ENCODE measurements at regions of chr2 and their contacts with region 1.

Region 1: DNA sequence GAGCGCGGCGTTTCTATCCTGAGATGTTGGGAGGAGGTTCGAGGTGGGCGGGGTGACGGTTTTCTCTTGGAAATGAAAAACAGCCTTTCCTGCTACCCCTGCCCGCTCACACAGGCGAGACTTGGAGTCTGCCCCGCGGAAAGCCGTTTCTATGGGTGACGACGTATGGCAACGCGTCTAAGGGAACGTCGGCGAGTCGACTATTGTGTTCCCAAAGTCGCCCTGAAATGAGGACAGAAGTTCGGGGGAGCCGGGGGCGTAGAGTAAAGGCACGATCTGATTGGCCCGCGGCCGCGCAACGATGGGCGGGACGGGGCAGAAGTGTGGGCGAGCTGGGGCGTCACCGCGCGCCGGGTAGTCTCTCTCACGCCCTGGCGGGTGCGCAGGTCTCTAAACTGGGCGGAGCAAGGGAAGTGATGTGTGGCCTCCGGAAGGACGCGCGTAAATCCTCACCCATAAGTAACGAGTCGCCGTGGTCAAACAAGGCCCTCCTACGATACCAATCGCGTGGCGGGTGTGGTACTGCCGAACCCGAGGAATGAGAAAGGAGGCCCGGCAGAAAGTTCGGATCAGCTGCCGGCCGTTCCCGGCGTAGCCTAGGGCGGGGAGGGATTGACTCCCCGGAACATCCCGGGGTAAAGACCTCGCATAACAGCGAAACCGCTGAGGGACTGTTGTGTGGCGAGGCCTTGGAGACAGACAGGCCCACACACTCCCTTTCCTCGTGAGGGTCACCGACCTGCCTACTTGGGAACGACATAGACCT is 89.6 kb downstream of the FAM161A start:
- DNase-seq: peak; percentile 99
- H3K4me3 ChIP-seq: peak overlapping the region; percentile 64 to 69 (median 68)
- H3K27ac ChIP-seq: peak overlapping the region; percentile 95 to 97 (median 96)
- H3K4me1 ChIP-seq: peaks cover 0 to 17% (median 10%) of the 10 kb centered on the region in 4 donors
- H3K27me3 ChIP-seq: no peaks in the 10 kb centered on the region
- CTCF ChIP-seq: no peak
- EP300 ChIP-seq: peak; percentile 35
- POLR2A ChIP-seq: peak; percentile 80

Region 2: DNA sequence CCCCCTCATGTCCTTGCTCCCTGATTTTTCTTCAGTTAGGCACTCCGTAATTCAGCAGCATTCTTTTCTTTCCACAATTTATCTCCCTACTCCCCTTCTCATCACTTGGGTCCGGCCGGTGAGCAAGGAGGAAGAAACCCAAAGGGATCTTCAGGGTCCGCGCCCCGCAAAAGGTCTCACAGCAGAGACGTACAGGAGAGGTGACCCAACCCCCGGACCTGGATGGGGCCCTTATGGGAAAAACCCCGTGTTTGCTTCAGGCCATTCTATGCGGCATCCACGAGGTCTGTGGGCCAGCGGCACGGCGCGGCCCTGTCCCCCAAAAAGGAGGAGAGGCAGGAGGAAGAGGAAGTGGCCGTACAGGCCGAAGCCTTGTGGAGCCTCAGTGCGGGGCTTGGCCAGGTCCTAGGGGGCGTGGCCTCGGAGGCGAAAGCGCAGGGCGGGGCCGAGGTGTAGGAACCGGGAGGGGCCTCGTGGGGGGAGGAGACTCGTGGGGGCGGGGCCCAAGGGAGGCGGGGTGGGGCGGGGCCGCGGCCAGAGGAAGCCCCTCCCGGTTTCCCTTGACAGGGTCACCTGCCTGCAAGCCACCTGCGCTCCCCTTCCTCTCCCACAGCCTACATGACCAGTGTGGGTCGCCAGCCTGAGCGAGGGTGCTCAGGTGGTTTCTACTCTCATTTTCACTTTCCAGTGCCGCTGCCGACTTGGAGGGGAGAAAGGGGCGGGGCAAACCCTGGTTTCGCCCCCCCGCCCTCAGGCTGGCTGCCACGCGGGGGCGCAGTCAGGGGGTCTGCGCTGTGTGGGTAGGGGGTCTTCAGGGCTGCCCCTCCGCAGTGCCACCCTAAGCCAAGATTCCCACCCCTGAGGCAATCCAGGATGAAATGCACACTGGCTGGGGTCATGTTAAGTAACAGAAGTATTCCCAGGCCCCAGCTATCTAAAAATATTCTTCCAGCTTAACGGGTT is 69.6 kb before region 1 on chr2:
- intact Hi-C with region 1: loop called (anchors 5 kb)
- DNase-seq: peak; percentile 97
- H3K4me3 ChIP-seq: peak overlapping the region; percentile 72 to 87 (median 84)
- H3K27ac ChIP-seq: peak overlapping the region; percentile 79 to 85 (median 82)
- H3K4me1 ChIP-seq: peaks cover 0 to 15% (median 13%) of the 10 kb centered on the region in 4 donors
- H3K27me3 ChIP-seq: no peaks in the 10 kb centered on the region
- CTCF ChIP-seq: peak; percentile 42 to 61 (median 56)
- EP300 ChIP-seq: no peak
- POLR2A ChIP-seq: no peak

Region 3: DNA sequence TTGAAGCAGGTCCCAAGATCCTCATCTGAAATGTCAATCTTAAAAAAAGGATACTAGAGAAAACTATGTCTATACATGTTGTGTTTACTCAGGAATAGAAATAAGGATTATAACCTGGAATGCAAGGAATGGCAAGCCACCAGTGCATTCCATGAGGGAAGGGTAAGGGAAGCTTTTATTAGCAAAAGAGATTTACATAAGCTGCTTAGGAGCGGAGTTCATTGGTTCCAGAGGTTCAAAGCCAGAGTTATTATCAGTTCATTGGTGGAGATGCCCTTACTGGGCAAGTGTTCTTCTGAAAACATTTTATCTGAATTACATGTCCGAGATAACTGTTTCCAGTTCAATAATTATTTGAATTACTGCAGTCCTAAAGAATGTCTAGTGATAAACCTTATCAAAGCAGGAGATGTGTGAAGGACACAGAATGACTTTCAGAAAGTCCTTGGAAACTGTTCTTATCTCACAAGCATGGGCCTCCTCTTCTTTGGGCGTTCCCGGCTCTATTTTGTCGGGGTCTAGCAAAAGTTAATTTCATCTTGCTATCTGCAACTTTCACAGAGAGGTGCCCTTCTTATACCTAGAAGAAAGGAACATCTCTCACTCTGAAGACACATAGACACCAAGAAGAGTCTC is 164.7 kb after region 1 on chr2:
- intact Hi-C with region 1: no loop called
- DNase-seq: peak; percentile 5
- H3K4me3 ChIP-seq: no peak overlapping the region
- H3K27ac ChIP-seq: no peak overlapping the region
- H3K4me1 ChIP-seq: peaks cover 0 to 7% (median 2%) of the 10 kb centered on the region in 4 donors
- H3K27me3 ChIP-seq: no peaks in the 10 kb centered on the region
- CTCF ChIP-seq: no peak
- EP300 ChIP-seq: no peak
- POLR2A ChIP-seq: no peak

Measured in esophagus muscularis mucosa (tissue), 4 donors.